H1 (cell line): ENCODE measurements at regions of chr5 and their contacts with region 1.

Region 1: DNA sequence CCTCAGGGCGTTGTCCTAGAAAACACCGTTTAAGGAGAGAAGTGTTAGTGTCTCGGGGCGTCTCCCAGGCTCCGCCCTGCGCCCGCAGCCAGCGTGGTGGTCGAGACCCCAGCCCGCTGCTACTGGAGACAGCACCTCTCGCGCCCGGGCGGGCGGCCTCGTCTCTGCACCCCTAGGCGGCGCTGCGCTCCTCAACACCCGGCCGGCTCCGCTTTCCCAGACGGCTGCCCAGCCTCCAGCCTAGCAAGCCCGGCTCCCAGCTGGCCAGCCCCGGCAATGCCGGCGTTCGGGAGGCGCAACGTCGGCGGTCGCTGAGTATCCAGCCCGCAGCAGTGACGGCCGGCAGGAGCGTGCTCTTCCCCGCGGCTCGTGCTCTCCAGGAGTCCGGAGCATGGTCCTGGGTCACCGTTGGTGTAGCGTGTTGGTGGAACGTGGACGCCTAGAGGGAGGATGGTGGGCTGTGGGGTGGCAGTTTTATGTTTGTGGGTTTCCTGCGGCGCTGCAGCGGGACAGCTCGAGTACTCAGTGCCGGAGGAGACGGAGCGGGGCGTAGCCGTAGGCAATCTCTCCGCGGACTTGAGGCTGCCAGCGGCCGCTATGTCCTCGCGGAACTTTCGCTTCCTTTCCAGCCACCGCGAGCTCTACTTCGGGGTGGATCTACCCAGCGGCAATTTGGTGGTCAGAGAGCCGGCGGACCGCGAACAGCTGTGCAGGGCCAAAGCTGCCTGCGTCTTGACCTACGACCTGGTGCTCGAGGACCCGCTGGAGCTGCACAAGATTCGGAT is 536 bp downstream of the PCDHAC1 start:
- DNase-seq: peak; percentile 81 to 98
- H3K4me3 ChIP-seq: peak overlapping the region; percentile 62 to 75 (median 70)
- H3K27ac ChIP-seq: no peak overlapping the region
- H3K4me1 ChIP-seq: peaks cover 0 to 15% (median 11%) of the 10 kb centered on the region in 4 experiments; a peak in 6 of 7 replicates
- H3K27me3 ChIP-seq: peaks cover 0 to 25% (median 15%) of the 10 kb centered on the region in 4 experiments; a peak in 6 of 7 replicates
- CTCF ChIP-seq: peak; percentile 84 to 98 (median 92)
- EP300 ChIP-seq: no peak
- POLR2A ChIP-seq: no peak; a peak in 1 of 3 replicates
- RAD21 ChIP-seq: peak; percentile 80 to 89

Region 2: GRCh38 chr5:140806834-140807775 is 119.5 kb before region 1 on chr5 and contains the start of gene PCDHA4:
- CTCF ChIA-PET with region 1: interaction called, 10 read pairs
- POLR2A ChIA-PET with region 1: no interaction called
- DNase-seq: peak in 1 of 2 experiments; percentile 94
- H3K4me3 ChIP-seq: peak within 1 kb of the TSS; percentile 80 to 88 (median 85)
- H3K27ac ChIP-seq: peak within 1 kb of the TSS; percentile 31; the same call in 1 of the 2 replicates
- H3K4me1 ChIP-seq: no peaks in the 10 kb centered on the region
- H3K27me3 ChIP-seq: no peaks in the 10 kb centered on the region
- CTCF ChIP-seq: peak; percentile 75 to 81 (median 81)
- EP300 ChIP-seq: no peak
- POLR2A ChIP-seq: peak in 1 of 2 experiments; percentile 59; a peak in 2 of 3 replicates
- RAD21 ChIP-seq: peak; percentile 75 to 76
- total RNA-seq, gene PCDHA4: 5.3 and 5.7 TPM in 2 replicates

Region 3: DNA sequence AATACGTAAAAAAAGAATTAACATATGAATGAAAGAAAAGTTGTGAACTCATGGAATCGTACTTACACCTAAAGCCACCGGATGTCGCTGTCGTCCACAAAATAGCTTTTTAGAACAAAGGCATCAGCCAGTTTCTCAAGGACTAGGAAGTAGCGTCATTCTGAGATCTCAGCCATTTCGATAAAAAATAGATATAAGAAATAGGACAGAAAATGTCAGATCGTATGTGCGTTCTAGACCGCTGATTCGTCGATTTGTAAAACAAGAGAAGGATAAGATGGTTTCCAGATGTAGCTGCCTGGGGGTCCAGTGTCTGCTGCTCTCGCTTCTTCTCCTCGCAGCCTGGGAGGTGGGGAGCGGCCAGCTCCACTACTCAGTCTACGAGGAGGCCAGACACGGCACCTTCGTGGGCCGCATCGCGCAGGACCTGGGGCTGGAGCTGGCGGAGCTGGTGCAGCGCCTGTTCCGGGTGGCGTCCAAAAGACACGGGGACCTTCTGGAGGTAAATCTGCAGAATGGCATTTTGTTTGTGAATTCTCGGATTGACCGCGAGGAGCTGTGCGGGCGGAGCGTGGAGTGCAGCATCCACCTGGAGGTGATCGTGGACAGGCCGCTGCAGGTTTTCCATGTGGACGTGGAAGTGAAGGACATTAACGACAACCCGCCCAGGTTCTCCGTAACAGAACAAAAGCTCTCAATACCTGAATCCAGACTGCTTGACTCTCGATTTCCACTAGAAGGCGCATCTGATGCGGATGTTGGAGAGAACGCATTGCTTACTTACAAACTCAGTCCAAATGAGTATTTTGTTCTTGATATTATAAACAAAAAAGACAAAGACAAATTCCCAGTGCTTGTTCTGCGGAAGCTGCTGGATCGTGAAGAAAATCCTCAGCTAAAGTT is 70.6 kb before region 1 on chr5 and contains the start of gene PCDHA10:
- CTCF ChIA-PET with region 1: interaction called, 15 read pairs
- POLR2A ChIA-PET with region 1: no interaction called
- DNase-seq: no peak
- H3K4me3 ChIP-seq: peak within 1 kb of the TSS; percentile 67 to 83 (median 72)
- H3K27ac ChIP-seq: no peak within 1 kb of the TSS; the same call in 1 of the 2 replicates
- H3K4me1 ChIP-seq: no peaks in the 10 kb centered on the region
- H3K27me3 ChIP-seq: no peaks in the 10 kb centered on the region
- CTCF ChIP-seq: peak in 2 of 3 experiments; percentile 40 to 47; a peak in 3 of 4 replicates
- EP300 ChIP-seq: no peak
- POLR2A ChIP-seq: no peak
- RAD21 ChIP-seq: peak; percentile 45 to 57; a peak in 3 of 4 replicates
- total RNA-seq, gene PCDHA10: 5.4 and 5.5 TPM in 2 replicates

Region 4: GRCh38 chr5:140882591-140882899 is 44.1 kb before region 1 on chr5:
- CTCF ChIA-PET with region 1: interaction called, 37 read pairs
- POLR2A ChIA-PET with region 1: interaction called, 3 read pairs
- DNase-seq: peak in 1 of 2 experiments; percentile 73
- H3K4me3 ChIP-seq: peak overlapping the region; percentile 11 to 60 (median 58); a peak in 6 of 8 replicates
- H3K27ac ChIP-seq: no peak overlapping the region
- H3K4me1 ChIP-seq: no peaks in the 10 kb centered on the region
- H3K27me3 ChIP-seq: no peaks in the 10 kb centered on the region
- CTCF ChIP-seq: peak in 2 of 3 experiments; percentile 70 to 80; a peak in 3 of 4 replicates
- EP300 ChIP-seq: no peak
- POLR2A ChIP-seq: no peak
- RAD21 ChIP-seq: peak; percentile 84 to 89

Region 5: GRCh38 chr5:140977003-140977402 is 50.4 kb after region 1 on chr5:
- CTCF ChIA-PET with region 1: interaction called, 11 read pairs
- POLR2A ChIA-PET with region 1: no interaction called
- DNase-seq: no peak
- H3K4me3 ChIP-seq: no peak overlapping the region
- H3K27ac ChIP-seq: no peak overlapping the region
- H3K4me1 ChIP-seq: peaks cover 0 to 8% (median 2%) of the 10 kb centered on the region in 4 experiments; a peak in 6 of 7 replicates
- H3K27me3 ChIP-seq: no peaks in the 10 kb centered on the region
- CTCF ChIP-seq: no peak
- EP300 ChIP-seq: no peak
- POLR2A ChIP-seq: no peak
- RAD21 ChIP-seq: no peak

Region 6: GRCh38 chr5:141001854-141002604 is 75.4 kb after region 1 on chr5:
- CTCF ChIA-PET with region 1: interaction called, 19 read pairs
- POLR2A ChIA-PET with region 1: interaction called, 25 read pairs
- DNase-seq: peak; percentile 85 to 88
- H3K4me3 ChIP-seq: peak overlapping the region; percentile 35 to 65 (median 57); a peak in 7 of 8 replicates
- H3K27ac ChIP-seq: peak overlapping the region; percentile 88
- H3K4me1 ChIP-seq: peaks cover 8 to 39% (median 31%) of the 10 kb centered on the region in 4 experiments; a peak in 6 of 7 replicates
- H3K27me3 ChIP-seq: no peaks in the 10 kb centered on the region
- CTCF ChIP-seq: no peak
- EP300 ChIP-seq: peak in 1 of 2 experiments; percentile 96; a peak in 1 of 3 replicates
- POLR2A ChIP-seq: peak in 1 of 2 experiments; percentile 87; a peak in 2 of 3 replicates
- RAD21 ChIP-seq: peak in 1 of 2 experiments; percentile 12; a peak in 1 of 4 replicates

Region 7: GRCh38 chr5:141032626-141033025 is 106.0 kb after region 1 on chr5:
- CTCF ChIA-PET with region 1: interaction called, 45 read pairs
- POLR2A ChIA-PET with region 1: interaction called, 4 read pairs
- DNase-seq: no peak
- H3K4me3 ChIP-seq: no peak overlapping the region
- H3K27ac ChIP-seq: no peak overlapping the region
- H3K4me1 ChIP-seq: no peaks in the 10 kb centered on the region
- H3K27me3 ChIP-seq: no peaks in the 10 kb centered on the region; a peak in 1 of 7 replicates
- CTCF ChIP-seq: peak in 2 of 3 experiments; percentile 18 to 32; a peak in 2 of 4 replicates
- EP300 ChIP-seq: no peak
- POLR2A ChIP-seq: no peak
- RAD21 ChIP-seq: peak; percentile 20 to 52